ENCODE measurements at regions of chr6 and their contacts with region 1.

Region 1: GRCh38 chr6:68634726-68635411 is at the start of gene ADGRB3:
- DNase-seq: peak; percentile 88 to 93 (median 90)
- ATAC-seq: peak; percentile 83
- H3K4me3 ChIP-seq: peak within 1 kb of the TSS; percentile 81
- H3K27ac ChIP-seq: peak within 1 kb of the TSS; percentile 72
- H3K4me1 ChIP-seq: peaks cover 6 to 27% of the 10 kb centered on the region in 2 experiments; a peak in 4 of 5 replicates
- H3K27me3 ChIP-seq: no peaks in the 10 kb centered on the region; a peak in 1 of 5 replicates
- CTCF ChIP-seq: peak in 2 of 3 experiments; percentile 17 to 65; a peak in 2 of 6 replicates
- EP300 ChIP-seq: no peak
- POLR2A ChIP-seq: no peak
- RAD21 ChIP-seq: peak in 1 of 2 experiments; percentile 18; a peak in 1 of 4 replicates
- polyA plus RNA-seq, gene ADGRB3: 0.90 to 1.5 TPM

Region 2: DNA sequence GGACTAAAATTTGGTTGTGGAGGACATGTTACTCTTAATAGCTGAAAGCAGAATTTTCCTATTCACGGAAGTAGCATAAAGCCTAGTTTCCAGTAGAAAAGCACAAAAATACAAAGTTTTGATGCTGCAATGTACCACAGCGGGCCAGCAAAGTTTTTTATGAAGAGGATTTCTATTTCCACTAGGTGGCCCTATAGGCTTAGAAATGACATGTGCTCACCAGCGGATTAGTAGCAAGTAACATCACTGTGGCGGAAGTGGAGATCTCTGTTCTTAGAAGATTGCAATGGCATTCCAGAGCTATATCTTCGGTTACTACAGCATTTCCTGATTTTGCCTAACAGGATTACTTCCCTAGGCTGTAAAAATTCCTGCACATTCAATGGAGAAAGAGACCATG is 1708.8 kb before region 1 on chr6:
- CTCF ChIA-PET with region 1: no interaction called
- POLR2A ChIA-PET with region 1: no interaction called
- in situ Hi-C with region 1: loop called (anchors 10 kb)
- intact Hi-C with region 1: loop called (anchors 5 kb)
- DNase-seq: peak; percentile 9 to 68 (median 16)
- ATAC-seq: peak; percentile 86
- H3K4me3 ChIP-seq: no peak overlapping the region
- H3K27ac ChIP-seq: no peak overlapping the region
- H3K4me1 ChIP-seq: no peaks in the 10 kb centered on the region
- H3K27me3 ChIP-seq: no peaks in the 10 kb centered on the region
- CTCF ChIP-seq: peak; percentile 47 to 68 (median 59)
- EP300 ChIP-seq: no peak
- POLR2A ChIP-seq: no peak
- RAD21 ChIP-seq: peak; percentile 79 to 85

Region 3: GRCh38 chr6:68572525-68572924 is 62.3 kb before region 1 on chr6:
- CTCF ChIA-PET with region 1: interaction called, 3 read pairs
- POLR2A ChIA-PET with region 1: interaction called, 4 read pairs
- in situ Hi-C with region 1: loop called (anchors 5 kb)
- intact Hi-C with region 1: loop called (anchors 1 kb)
- DNase-seq: peak; percentile 51 to 83 (median 62)
- ATAC-seq: peak; percentile 92
- H3K4me3 ChIP-seq: no peak overlapping the region
- H3K27ac ChIP-seq: no peak overlapping the region
- H3K4me1 ChIP-seq: no peaks in the 10 kb centered on the region
- H3K27me3 ChIP-seq: no peaks in the 10 kb centered on the region
- CTCF ChIP-seq: peak; percentile 80 to 95 (median 94)
- EP300 ChIP-seq: no peak
- POLR2A ChIP-seq: no peak
- RAD21 ChIP-seq: peak; percentile 76 to 89

Region 4: DNA sequence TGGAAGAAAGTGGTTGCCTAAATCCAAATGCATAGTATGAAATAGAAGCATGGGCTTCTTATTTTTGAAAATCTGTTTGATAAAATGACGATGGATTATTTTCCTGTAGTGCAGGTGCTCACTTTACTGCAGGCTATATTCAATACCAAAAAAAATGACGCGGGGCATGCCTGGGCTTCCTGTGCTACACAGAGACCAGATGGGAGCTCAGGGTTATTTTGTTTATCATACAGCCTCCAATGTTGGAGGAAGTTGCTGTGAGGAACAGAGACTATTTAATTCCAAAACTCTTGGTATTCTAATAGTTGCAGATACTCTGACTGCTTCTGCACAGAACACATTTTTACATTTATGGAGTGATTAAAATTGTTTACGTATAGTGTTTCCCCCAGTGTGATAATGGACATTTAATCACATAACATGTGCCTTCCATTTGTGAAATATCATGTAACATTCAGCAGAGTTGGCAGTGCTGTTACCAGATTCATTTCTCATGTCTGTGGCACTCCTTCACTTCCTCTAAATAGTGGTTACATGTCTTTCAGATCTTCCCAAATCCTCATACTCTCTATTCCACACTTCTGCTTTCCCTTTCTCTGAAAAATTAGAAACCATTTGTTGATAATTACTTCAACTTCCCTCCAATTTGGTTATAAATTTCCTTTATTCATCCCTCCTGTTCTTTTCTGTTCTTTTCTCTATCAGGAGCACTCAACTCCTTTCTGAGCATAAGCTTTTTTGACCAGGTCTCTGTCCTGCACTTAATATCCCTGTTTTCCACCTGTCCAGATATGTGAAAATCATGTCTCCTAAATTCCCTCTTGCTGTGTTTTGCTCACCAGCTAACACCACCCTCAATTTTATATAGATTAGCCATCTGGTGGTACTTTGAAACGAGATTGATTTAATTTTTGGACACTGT is 121.8 kb after region 1 on chr6:
- CTCF ChIA-PET with region 1: interaction called, 10 read pairs
- POLR2A ChIA-PET with region 1: no interaction called
- in situ Hi-C with region 1: no loop called
- intact Hi-C with region 1: loop called (anchors 1 kb)
- DNase-seq: no peak
- ATAC-seq: peak; percentile 16; the same call in 2 of the 3 replicates
- H3K4me3 ChIP-seq: no peak overlapping the region
- H3K27ac ChIP-seq: peak overlapping the region; percentile 31; the same call in 1 of the 3 replicates
- H3K4me1 ChIP-seq: peaks cover 0 to 19% of the 10 kb centered on the region in 2 experiments; a peak in 2 of 5 replicates
- H3K27me3 ChIP-seq: no peaks in the 10 kb centered on the region
- CTCF ChIP-seq: no peak
- EP300 ChIP-seq: no peak
- POLR2A ChIP-seq: no peak
- RAD21 ChIP-seq: no peak

Region 5: GRCh38 chr6:68967549-68968300 is 332.9 kb after region 1 on chr6:
- CTCF ChIA-PET with region 1: interaction called, 6 read pairs
- POLR2A ChIA-PET with region 1: interaction called, 3 read pairs
- in situ Hi-C with region 1: loop called (anchors 25 kb)
- intact Hi-C with region 1: loop called (anchors 2 kb)
- DNase-seq: peak; percentile 71 to 83 (median 72)
- ATAC-seq: peak; percentile 93
- H3K4me3 ChIP-seq: peak overlapping the region; percentile 14
- H3K27ac ChIP-seq: peak overlapping the region; percentile 84
- H3K4me1 ChIP-seq: peaks cover 5 to 12% of the 10 kb centered on the region in 2 experiments; a peak in 4 of 5 replicates
- H3K27me3 ChIP-seq: no peaks in the 10 kb centered on the region
- CTCF ChIP-seq: peak; percentile 77 to 88 (median 84)
- EP300 ChIP-seq: no peak; the same call in 1 of the 2 replicates
- POLR2A ChIP-seq: no peak
- RAD21 ChIP-seq: peak; percentile 62 to 71

Measured in K562 (cell line).